ENCODE measurements at regions of chr21 and their contacts with region 1.

Region 1: GRCh38 chr21:14864211-14865021 is 200.4 kb downstream of the NRIP1 start:
- DNase-seq: peak; percentile 61
- H3K4me3 Mint-ChIP-seq: no peak overlapping the region
- H3K27ac Mint-ChIP-seq: no peak overlapping the region
- H3K4me1 Mint-ChIP-seq: no peaks in the 10 kb centered on the region
- H3K27me3 Mint-ChIP-seq: peaks cover 4% of the 10 kb centered on the region

Region 2: GRCh38 chr21:15483138-15483780 is 618.8 kb after region 1 on chr21:
- CTCF ChIA-PET with region 1: interaction called, 29 read pairs
- DNase-seq: peak; percentile 84
- H3K4me3 Mint-ChIP-seq: no peak overlapping the region
- H3K27ac Mint-ChIP-seq: no peak overlapping the region
- H3K4me1 Mint-ChIP-seq: peaks cover 8% of the 10 kb centered on the region
- H3K27me3 Mint-ChIP-seq: no peaks in the 10 kb centered on the region

Region 3: DNA sequence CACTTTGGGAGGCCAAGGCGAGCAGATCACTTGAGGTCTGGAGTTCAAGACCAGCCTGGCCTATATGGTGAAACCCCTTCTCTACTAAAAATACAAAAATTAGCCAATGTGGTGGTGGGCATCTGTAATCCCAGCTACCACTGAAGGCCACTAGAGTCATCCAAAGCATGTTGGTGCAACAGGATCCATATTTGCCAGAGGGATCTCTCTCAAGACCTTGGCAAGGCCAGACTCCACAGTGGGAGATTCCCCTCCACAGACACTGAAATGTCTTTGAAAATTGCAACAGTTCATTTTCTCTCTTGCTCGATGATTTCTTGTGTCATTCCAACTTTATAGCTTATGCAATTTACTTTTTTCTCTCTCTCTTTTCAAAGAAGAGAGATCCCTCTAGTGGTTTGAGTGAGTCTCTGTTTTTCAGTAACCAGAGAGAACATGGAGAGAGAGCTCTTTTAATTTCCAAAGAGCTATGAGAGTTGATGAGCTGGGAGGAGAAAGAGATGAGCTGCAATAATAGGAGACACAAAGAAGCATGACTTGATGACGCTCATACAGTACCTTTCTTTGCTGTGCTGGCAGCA is 688.6 kb after region 1 on chr21:
- CTCF ChIA-PET with region 1: interaction called, 10 read pairs
- DNase-seq: no peak
- H3K4me3 Mint-ChIP-seq: no peak overlapping the region
- H3K27ac Mint-ChIP-seq: no peak overlapping the region
- H3K4me1 Mint-ChIP-seq: peaks cover 9% of the 10 kb centered on the region
- H3K27me3 Mint-ChIP-seq: no peaks in the 10 kb centered on the region

Measured in activated naive CD4-positive, alpha-beta T cell treated with anti-CD3 and anti-CD28 coated beads, Interleukin-2, amount 10 ng/mL, durations not matched to agents 7 days and 5 days (primary cell).